K562 (cell line): ENCODE measurements at regions of chr11 and their contacts with region 1.

Region 1: GRCh38 chr11:83007909-83008580 is 63.7 kb downstream of the RAB30 start:
- DNase-seq: peak; percentile 62 to 95 (median 79)
- ATAC-seq: peak; percentile 97
- H3K4me3 ChIP-seq: no peak overlapping the region
- H3K27ac ChIP-seq: peak overlapping the region; percentile 60
- H3K4me1 ChIP-seq: peaks cover 13 to 27% of the 10 kb centered on the region in 2 experiments; a peak in 4 of 5 replicates
- H3K27me3 ChIP-seq: no peaks in the 10 kb centered on the region
- CTCF ChIP-seq: peak in 2 of 3 experiments; percentile 8 to 40; a peak in 2 of 6 replicates
- EP300 ChIP-seq: peak; percentile 88
- POLR2A ChIP-seq: 0 out of 2 replicates have a peak, but pooled peaks have one; percentile 33
- RAD21 ChIP-seq: peak in 1 of 2 experiments; percentile 49; a peak in 3 of 4 replicates

Region 2: GRCh38 chr11:83071567-83072349 is 63.7 kb after region 1 on chr11 and contains the start of gene RAB30:
- CTCF ChIA-PET with region 1: no interaction called
- POLR2A ChIA-PET with region 1: interaction called, 3 read pairs
- in situ Hi-C with region 1: no loop called
- intact Hi-C with region 1: loop called (anchors 5 kb)
- DNase-seq: peak; percentile 91 to 99 (median 94)
- ATAC-seq: peak; percentile 97
- H3K4me3 ChIP-seq: peak within 1 kb of the TSS; percentile 68
- H3K27ac ChIP-seq: peak within 1 kb of the TSS; percentile 86
- H3K4me1 ChIP-seq: peaks cover 12% of the 10 kb centered on the region in 2 experiments; a peak in 2 of 5 replicates
- H3K27me3 ChIP-seq: no peaks in the 10 kb centered on the region
- CTCF ChIP-seq: no peak; a peak in 1 of 6 replicates
- EP300 ChIP-seq: peak; percentile 23; the same call in 1 of the 2 replicates
- POLR2A ChIP-seq: peak; percentile 97
- RAD21 ChIP-seq: peak; percentile 11 to 38; a peak in 3 of 4 replicates
- polyA plus RNA-seq, gene RAB30: 0.68 to 1.0 TPM